PC-9 (cell line): ENCODE measurements at regions of chr7 and their contacts with region 1.

Region 1: DNA sequence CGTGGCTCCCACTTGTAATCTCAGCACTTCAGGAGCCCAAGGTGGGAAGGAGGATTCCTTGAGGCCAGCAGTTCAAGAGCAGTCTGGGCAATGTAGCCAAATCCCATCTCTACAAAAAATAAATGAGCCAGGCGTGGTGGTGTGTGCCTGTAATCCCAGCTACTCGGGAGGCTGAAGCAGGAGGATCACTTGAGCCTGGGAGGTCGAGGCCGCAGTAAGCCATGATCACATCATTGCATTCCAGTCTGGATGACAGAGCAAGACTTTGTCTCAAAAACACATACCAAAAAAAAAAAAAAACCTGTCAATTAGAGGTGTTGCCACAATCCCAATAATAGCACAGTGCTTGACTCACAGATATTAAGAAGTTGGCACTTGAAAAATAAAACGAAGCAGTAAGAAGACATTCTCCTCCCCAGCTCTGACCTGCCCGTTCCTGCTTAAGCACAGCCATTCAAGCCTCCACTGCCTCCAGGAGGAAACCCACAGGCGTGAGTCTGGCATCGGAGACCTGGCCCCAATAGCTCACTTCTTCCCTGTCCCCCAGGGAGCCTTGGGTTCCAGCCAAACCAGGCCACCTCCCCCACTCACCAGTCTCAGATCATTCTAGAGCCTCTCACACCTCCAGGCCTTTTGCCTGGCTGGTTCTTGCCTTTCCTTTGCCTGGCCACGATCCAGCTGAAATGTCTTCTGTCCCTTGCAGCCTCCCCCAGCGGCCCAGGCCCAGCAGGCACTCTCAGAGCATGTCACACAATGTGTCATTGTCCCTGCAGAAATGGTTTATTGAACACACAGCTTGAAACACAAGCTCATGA is 45.3 kb upstream of the GTF2I start:
- DNase-seq: peak; percentile 74 to 83
- H3K4me3 ChIP-seq: no peak overlapping the region
- H3K27ac ChIP-seq: peak overlapping the region; percentile 63
- H3K4me1 ChIP-seq: peaks cover 32% of the 10 kb centered on the region
- H3K27me3 ChIP-seq: no peaks in the 10 kb centered on the region
- CTCF ChIP-seq: no peak

Region 2: GRCh38 chr7:74575138-74575727 is 37.0 kb before region 1 on chr7:
- CTCF ChIA-PET with region 1: no interaction called
- POLR2A ChIA-PET with region 1: interaction called, 22 read pairs
- intact Hi-C with region 1: no loop called
- DNase-seq: peak; percentile 82 to 87
- H3K4me3 ChIP-seq: no peak overlapping the region
- H3K27ac ChIP-seq: peak overlapping the region; percentile 78
- H3K4me1 ChIP-seq: peaks cover 56% of the 10 kb centered on the region
- H3K27me3 ChIP-seq: no peaks in the 10 kb centered on the region
- CTCF ChIP-seq: no peak

Region 3: DNA sequence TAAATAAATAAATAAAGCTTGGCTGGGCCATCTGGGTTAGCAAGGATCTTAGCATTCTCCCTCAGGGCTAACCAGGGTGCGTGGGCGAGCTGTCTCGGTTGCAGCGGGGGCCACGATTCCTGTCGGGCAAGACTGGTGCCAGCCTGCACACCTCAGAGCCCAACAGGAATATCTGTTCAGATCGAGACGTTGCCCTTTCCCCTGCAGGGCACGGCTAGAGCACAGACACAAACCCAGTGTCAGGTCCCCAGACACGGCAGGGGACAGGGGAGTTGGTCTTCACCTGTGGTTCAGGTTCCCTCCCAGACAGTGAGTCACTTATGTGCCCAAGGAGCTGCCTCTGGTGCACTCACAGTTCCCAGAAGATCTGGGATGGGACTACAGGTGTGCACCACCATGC is 30.2 kb before region 1 on chr7:
- CTCF ChIA-PET with region 1: no interaction called
- POLR2A ChIA-PET with region 1: interaction called, 22 read pairs
- intact Hi-C with region 1: loop called (anchors 1 kb)
- DNase-seq: peak; percentile 91 to 94
- H3K4me3 ChIP-seq: no peak overlapping the region
- H3K27ac ChIP-seq: peak overlapping the region; percentile 89
- H3K4me1 ChIP-seq: peaks cover 85% of the 10 kb centered on the region
- H3K27me3 ChIP-seq: no peaks in the 10 kb centered on the region
- CTCF ChIP-seq: no peak

Region 4: GRCh38 chr7:74625446-74625845 is 13.2 kb after region 1 on chr7:
- CTCF ChIA-PET with region 1: interaction called, 15 read pairs
- POLR2A ChIA-PET with region 1: no interaction called
- intact Hi-C with region 1: no loop called
- DNase-seq: peak in 1 of 2 experiments; percentile 50
- H3K4me3 ChIP-seq: no peak overlapping the region
- H3K27ac ChIP-seq: no peak overlapping the region
- H3K4me1 ChIP-seq: no peaks in the 10 kb centered on the region
- H3K27me3 ChIP-seq: no peaks in the 10 kb centered on the region
- CTCF ChIP-seq: 0 out of 2 replicates have a peak, but pooled peaks have one; percentile 22

Region 5: GRCh38 chr7:74633451-74633921 is 21.3 kb after region 1 on chr7:
- CTCF ChIA-PET with region 1: interaction called, 3 read pairs
- POLR2A ChIA-PET with region 1: interaction called, 9 read pairs
- intact Hi-C with region 1: loop called (anchors 2 kb)
- DNase-seq: peak; percentile 63
- H3K4me3 ChIP-seq: no peak overlapping the region
- H3K27ac ChIP-seq: peak overlapping the region; percentile 13; the same call in 1 of the 2 replicates
- H3K4me1 ChIP-seq: peaks cover 32% of the 10 kb centered on the region
- H3K27me3 ChIP-seq: no peaks in the 10 kb centered on the region
- CTCF ChIP-seq: no peak

Region 6: DNA sequence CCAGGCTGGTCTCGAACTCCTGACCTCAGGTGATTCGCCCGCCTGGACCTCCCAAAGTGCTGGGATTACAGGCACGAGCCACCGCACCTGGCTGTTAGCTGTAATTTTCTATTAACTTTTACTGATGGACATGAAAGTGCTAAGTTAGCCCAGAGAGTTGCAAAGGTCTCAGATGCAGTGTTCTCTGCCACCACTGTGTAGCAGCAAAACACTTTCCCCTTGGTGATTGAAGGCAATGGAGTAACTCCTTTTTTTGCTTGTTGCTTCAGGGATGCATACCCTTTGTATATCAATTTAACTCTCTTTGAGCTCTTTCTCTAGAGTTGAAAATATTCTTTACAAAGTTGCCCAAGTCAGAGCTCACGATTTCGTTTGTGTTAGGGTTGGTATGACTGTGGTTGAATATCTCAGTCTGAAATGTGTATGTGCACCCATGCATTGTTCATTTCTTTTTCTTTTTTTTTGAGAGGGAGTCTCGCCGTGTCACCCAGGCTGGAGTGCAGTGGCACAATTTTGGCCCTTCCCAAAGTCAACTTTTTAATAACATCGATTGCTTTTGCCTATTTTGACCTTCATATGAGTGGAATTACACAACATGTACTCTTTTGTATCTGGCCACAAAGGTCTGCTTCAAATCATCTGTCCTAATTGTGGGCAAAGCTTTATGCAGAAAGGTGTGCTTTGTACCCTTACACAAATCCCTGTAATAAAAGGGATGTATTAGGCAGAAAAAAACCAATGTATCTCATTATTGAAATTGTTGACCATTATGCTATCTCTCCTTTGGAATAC is 97.9 kb after region 1 on chr7:
- CTCF ChIA-PET with region 1: no interaction called
- POLR2A ChIA-PET with region 1: no interaction called
- intact Hi-C with region 1: no loop called
- DNase-seq: no peak
- H3K4me3 ChIP-seq: no peak overlapping the region
- H3K27ac ChIP-seq: no peak overlapping the region
- H3K4me1 ChIP-seq: no peaks in the 10 kb centered on the region
- H3K27me3 ChIP-seq: no peaks in the 10 kb centered on the region
- CTCF ChIP-seq: no peak